ENCODE measurements at regions of chr14 and their contacts with region 1.

Region 1: DNA sequence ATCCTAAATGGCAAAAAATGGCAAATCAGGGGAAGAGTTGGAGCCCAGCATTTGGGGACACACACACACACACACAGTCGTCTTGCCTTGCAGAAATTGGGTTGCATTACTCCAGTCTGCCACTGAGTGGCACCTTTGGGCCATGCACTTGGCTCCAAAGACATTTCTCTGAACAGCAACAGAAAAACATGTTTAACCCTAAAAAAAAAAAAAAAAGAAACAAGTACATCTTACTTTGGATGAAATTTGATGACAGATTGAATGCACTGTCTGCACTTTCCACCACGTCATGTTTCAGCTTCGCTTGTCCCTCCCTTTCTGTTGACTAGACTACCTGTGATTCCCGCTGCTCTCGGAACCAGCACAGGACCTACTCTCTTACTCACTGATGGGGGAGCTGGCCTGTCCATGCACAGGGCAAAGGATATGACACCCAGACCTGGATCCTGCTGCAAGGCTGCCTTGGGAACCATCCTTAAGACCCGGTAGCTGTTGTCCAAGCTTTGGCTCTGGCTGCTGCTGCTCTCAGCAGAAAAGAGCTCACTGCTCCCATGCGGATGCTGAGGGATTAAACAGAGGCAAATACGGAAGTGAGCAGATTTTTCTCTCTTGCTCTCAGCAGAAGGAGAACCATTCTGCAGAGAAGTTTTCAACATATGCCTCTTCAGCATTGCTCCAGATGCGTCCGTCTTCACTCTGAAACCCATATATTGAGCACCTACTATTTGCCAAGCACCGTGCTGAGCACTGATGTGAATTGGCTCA is 376.8 kb downstream of the DPF3 start:
- DNase-seq: peak; percentile 13 to 52
- ATAC-seq: peak; percentile 79 to 82
- H3K4me3 ChIP-seq: no peak overlapping the region
- H3K27ac ChIP-seq: no peak overlapping the region
- H3K4me1 ChIP-seq: peaks cover 0 to 3% of the 10 kb centered on the region in 2 donors
- H3K27me3 ChIP-seq: no peaks in the 10 kb centered on the region
- CTCF ChIP-seq: peak; percentile 75 to 91 (median 83)
- POLR2A ChIP-seq: no peak

Region 2: GRCh38 chr14:72544619-72545387 is 27.7 kb after region 1 on chr14:
- in situ Hi-C with region 1: no loop called
- intact Hi-C with region 1: no loop called
- DNase-seq: no peak
- ATAC-seq: no peak
- H3K4me3 ChIP-seq: no peak overlapping the region
- H3K27ac ChIP-seq: peak overlapping the region in 1 of 4 donors; percentile 64
- H3K4me1 ChIP-seq: peaks cover 31 to 45% of the 10 kb centered on the region in 2 donors
- H3K27me3 ChIP-seq: no peaks in the 10 kb centered on the region
- CTCF ChIP-seq: no peak
- POLR2A ChIP-seq: no peak

Region 3: DNA sequence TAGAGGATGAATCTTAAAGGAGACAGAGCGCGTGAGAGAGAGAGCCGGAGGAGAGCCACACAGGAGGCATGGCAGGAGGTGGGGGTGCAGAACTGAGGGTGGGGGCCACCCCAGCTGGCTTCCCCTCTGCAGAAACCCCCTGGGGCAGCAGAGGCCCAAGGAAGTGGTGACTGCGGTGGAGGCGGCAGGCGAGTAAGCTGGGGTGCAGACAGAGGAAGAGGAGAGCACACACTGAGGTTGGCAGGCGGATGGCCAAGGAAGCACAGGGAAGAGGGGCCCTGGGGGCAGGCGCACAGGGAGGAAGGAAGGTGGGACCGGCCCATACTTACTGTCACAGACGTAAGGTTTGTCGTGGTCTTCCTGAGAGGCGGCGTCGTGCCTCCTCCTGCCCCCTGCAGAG is 197.0 kb after region 1 on chr14:
- in situ Hi-C with region 1: no loop called
- intact Hi-C with region 1: loop called (anchors 10 kb)
- DNase-seq: no peak
- ATAC-seq: no peak
- H3K4me3 ChIP-seq: no peak overlapping the region
- H3K27ac ChIP-seq: peak overlapping the region; percentile 90 to 94 (median 92)
- H3K4me1 ChIP-seq: peaks cover 41 to 49% of the 10 kb centered on the region in 2 donors
- H3K27me3 ChIP-seq: no peaks in the 10 kb centered on the region
- CTCF ChIP-seq: no peak
- POLR2A ChIP-seq: no peak

Region 4: DNA sequence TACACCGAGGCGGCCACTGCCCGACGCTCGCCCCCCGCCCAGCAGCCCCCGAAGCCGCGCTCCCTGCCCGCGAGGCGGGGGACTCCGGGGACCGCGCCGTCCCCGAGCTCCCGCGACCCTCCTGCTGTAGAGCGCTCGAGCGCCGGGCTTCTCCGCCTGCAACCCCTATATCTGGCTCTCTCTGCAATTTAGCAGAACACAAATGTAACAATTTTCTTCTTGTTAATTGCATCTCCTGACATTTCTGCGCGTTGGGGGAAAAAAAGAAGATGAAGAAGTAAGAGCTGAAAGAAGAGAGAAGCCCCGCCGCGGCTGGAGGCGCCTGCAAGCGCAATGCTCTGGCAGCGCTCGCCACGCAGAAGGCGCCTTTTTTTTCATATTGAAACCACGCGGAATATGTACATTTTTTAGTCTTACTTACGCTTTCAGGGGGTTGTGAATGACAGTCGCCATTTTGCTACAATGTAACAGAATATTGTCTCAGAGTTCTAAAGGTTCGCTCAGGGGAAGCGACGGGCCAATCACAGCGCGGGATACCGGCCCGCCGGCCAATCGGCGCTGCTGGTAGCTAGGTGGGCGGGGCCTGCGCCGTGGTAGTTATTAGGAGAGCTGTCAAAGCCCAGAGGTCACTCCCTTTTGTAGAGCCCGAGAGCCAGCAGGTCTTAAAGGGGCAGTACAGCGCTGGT is 376.7 kb after region 1 on chr14 and contains the start of gene DPF3:
- in situ Hi-C with region 1: loop called in 1 of 4 experiments (anchors 5 kb)
- intact Hi-C with region 1: no loop called
- DNase-seq: peak; percentile 97 to 98
- ATAC-seq: peak; percentile 88 to 91
- H3K4me3 ChIP-seq: peak within 1 kb of the TSS; percentile 89 to 99 (median 96)
- H3K27ac ChIP-seq: peak within 1 kb of the TSS; percentile 91 to 94 (median 94)
- H3K4me1 ChIP-seq: peaks cover 48 to 51% of the 10 kb centered on the region in 2 donors
- H3K27me3 ChIP-seq: no peaks in the 10 kb centered on the region
- CTCF ChIP-seq: no peak
- POLR2A ChIP-seq: peak; percentile 86 to 98
- total RNA-seq, gene DPF3: 16.7 to 27.8 (median 20.3) TPM

Region 5: GRCh38 chr14:72904840-72905561 is 387.9 kb after region 1 on chr14:
- in situ Hi-C with region 1: loop called in 3 of 4 experiments (anchors 5 to 10 kb)
- intact Hi-C with region 1: loop called (anchors 1 kb)
- DNase-seq: peak; percentile 49 to 72
- ATAC-seq: peak; percentile 48 to 49
- H3K4me3 ChIP-seq: no peak overlapping the region
- H3K27ac ChIP-seq: peak overlapping the region; percentile 6 to 87 (median 31)
- H3K4me1 ChIP-seq: peaks cover 37 to 69% of the 10 kb centered on the region in 2 donors
- H3K27me3 ChIP-seq: no peaks in the 10 kb centered on the region
- CTCF ChIP-seq: peak; percentile 92 to 97 (median 95)
- POLR2A ChIP-seq: no peak

Region 6: DNA sequence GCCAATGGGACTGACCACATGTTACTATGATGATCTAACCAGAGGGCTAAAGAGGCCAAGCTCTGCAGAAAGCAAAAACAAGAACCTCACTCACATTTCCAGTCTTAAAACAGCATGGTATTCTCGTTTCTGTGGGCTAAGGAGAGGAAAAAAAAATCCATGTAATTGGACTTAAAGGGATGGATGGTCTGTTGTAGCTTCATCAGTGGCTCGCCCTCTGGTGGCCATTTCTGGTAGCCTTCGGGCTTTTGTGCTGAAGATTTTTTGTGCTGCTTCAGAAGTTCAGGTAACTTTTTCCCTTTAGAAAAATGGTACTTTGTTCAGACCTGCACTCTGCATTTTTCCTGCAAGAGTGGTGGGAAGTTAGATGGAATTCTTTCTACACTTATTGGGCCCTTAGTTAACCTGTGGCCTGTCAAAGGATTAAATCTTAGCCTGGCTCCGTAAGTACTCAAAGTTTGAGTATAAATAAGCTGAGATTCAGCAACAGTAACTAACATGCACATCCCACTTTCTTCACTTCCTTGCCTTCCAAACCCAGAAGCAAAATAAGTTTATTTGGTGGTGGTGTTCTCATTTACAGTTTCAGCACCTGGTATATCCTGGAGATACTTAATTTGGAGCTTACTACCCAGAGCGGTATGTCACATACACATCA is 431.5 kb after region 1 on chr14:
- in situ Hi-C with region 1: loop called (anchors 5 to 10 kb)
- intact Hi-C with region 1: no loop called
- DNase-seq: peak in 1 of 2 donors; percentile 61
- ATAC-seq: peak in 1 of 2 donors; percentile 42
- H3K4me3 ChIP-seq: no peak overlapping the region
- H3K27ac ChIP-seq: no peak overlapping the region
- H3K4me1 ChIP-seq: no peaks in the 10 kb centered on the region
- H3K27me3 ChIP-seq: no peaks in the 10 kb centered on the region
- CTCF ChIP-seq: peak; percentile 59 to 88 (median 82)
- POLR2A ChIP-seq: no peak

Measured in gastrocnemius medialis (tissue), 4 donors.